ENCODE measurements at regions of chr2 and their contacts with region 1.

Region 1: GRCh38 chr2:45833968-45834344 is 182.5 kb downstream of the PRKCE start:
- DNase-seq: peak; percentile 29
- ATAC-seq: peak; percentile 75
- H3K4me3 Mint-ChIP-seq: peak overlapping the region; percentile 39
- H3K27ac Mint-ChIP-seq: peak overlapping the region; percentile 94
- H3K4me1 Mint-ChIP-seq: peaks cover 71% of the 10 kb centered on the region
- H3K27me3 Mint-ChIP-seq: no peaks in the 10 kb centered on the region
- CTCF ChIP-seq: no peak

Region 2: DNA sequence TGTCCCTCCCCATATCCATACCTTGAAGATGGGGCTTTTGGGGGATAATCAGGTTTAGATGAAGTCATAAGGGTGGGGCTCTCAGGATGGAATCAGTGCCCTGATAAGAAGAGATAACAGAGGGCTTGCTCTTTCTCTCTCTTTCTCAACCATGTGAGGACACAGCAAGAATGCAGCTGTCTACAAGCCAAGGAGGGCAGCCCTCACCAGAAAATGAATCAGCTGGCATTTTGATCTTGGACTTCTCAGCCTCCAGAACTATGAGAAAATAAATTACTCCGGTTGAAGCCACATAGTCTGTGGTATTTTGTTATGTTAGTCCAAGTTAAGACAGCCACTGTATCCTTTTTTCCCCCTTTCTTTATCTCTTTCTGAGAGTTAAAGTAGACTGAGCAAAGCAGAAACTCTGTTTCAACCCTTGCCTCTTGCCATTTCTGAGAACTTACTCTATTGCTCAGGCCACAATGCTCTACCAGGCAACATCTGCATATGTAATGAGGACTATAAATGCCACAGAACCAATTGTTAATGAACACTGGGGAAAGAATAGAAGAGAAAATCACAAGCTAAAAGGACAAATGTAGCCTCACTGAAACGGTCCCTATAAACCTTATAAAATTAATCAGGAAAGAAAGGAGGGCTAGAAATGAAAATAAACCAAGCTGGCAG is 279.7 kb before region 1 on chr2:
- CTCF ChIA-PET with region 1: no interaction called
- POLR2A ChIA-PET with region 1: no interaction called
- intact Hi-C with region 1: no loop called
- DNase-seq: no peak
- ATAC-seq: no peak
- H3K4me3 Mint-ChIP-seq: no peak overlapping the region
- H3K27ac Mint-ChIP-seq: no peak overlapping the region
- H3K4me1 Mint-ChIP-seq: no peaks in the 10 kb centered on the region
- H3K27me3 Mint-ChIP-seq: no peaks in the 10 kb centered on the region
- CTCF ChIP-seq: no peak

Region 3: DNA sequence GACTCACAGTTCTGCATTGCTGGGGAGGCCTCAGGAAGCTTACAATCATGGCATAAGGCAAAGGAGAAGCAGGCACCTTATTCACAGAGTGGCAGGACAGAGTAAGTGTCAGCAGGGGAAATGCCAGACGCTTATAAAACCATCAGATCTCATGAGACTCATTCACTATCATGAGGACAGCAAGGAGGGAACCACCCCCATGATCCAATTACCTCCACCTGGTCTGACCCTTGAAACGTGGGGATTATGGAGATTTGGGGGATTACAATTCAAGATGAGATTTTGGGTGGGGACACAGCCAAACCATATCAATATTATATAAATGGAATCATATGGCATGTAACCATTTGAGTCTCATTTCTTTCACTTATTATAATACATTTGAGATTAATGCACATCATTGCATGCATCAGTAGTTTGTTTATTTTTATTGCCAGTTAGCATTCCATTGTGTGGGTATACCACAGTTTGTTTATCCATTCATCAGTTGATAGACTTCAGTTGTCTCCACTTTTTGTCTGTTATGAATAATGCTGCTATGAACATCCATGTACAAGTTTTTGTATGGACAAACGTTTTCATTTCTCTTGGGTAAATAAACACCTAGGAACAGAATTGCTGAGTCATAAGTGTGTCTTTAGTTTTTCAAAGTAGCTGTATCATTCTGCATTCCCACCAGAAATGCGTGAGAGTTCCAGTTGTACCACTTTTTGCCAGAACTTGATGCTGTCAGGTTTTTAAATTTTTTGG is 217.1 kb before region 1 on chr2:
- CTCF ChIA-PET with region 1: no interaction called
- POLR2A ChIA-PET with region 1: no interaction called
- intact Hi-C with region 1: no loop called
- DNase-seq: no peak
- ATAC-seq: no peak
- H3K4me3 Mint-ChIP-seq: no peak overlapping the region
- H3K27ac Mint-ChIP-seq: no peak overlapping the region
- H3K4me1 Mint-ChIP-seq: peaks cover 5% of the 10 kb centered on the region
- H3K27me3 Mint-ChIP-seq: no peaks in the 10 kb centered on the region
- CTCF ChIP-seq: no peak

Region 4: DNA sequence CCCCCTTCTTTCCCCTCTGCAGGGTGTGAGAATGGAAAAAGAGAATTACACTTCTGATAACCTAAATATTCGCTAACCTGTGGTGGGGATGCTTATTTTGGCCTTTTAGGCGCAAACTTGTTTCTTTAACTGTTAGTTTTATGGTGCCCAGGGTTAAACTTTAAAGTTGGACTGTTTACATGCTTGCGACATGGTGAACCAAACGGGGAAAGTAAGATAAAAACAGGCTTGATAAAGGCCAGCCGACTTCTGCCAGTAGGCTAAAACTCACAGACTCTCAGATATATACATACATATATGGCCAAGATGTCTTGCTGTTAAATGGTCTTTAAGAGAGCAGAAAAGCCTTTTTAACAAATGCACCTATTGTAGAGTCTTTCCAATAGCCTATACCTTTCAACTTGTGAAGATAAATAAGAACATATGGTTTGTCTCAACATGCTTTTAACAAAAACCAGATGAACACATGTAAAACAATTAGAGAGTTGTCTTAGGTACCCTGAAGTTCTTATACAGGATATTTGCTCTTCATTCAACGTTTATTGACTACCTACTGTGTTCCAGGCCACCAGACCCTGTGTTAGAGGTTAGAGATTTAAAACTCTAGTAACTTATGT is 153.5 kb before region 1 on chr2:
- CTCF ChIA-PET with region 1: no interaction called
- POLR2A ChIA-PET with region 1: interaction called, 10 read pairs
- intact Hi-C with region 1: no loop called
- DNase-seq: no peak
- ATAC-seq: no peak
- H3K4me3 Mint-ChIP-seq: no peak overlapping the region
- H3K27ac Mint-ChIP-seq: no peak overlapping the region
- H3K4me1 Mint-ChIP-seq: peaks cover 52% of the 10 kb centered on the region
- H3K27me3 Mint-ChIP-seq: no peaks in the 10 kb centered on the region
- CTCF ChIP-seq: no peak

Region 5: DNA sequence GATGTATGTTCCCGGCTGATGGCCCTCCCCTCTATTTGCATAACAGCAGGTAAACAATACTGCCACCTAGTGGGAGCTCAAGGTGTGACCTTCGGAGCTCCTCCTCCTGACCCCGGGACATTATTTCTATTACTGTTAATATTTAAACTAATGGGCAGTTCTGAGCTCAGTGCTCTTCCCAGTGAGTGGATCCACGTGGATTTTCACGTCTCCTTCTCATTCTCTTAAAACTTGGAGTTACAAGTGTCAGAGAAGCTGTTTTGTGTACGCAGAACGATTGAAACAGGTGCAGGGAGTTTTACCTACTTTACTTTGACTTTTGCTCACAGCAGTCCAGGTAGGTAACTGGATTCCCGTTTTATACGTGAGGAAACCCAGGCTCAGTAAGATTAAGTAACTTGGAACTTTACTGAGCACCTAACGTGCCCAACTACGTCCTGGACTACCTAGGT is 55.2 kb before region 1 on chr2:
- CTCF ChIA-PET with region 1: interaction called, 10 read pairs
- POLR2A ChIA-PET with region 1: interaction called, 8 read pairs
- intact Hi-C with region 1: loop called (anchors 5 kb)
- DNase-seq: peak; percentile 35
- ATAC-seq: peak; percentile 83
- H3K4me3 Mint-ChIP-seq: peak overlapping the region; percentile 44
- H3K27ac Mint-ChIP-seq: peak overlapping the region; percentile 39
- H3K4me1 Mint-ChIP-seq: peaks cover 76% of the 10 kb centered on the region
- H3K27me3 Mint-ChIP-seq: no peaks in the 10 kb centered on the region
- CTCF ChIP-seq: no peak

Region 6: GRCh38 chr2:45851613-45852304 is 17.8 kb after region 1 on chr2:
- CTCF ChIA-PET with region 1: interaction called, 5 read pairs
- POLR2A ChIA-PET with region 1: interaction called, 7 read pairs
- intact Hi-C with region 1: loop called (anchors 2 kb)
- DNase-seq: no peak
- ATAC-seq: no peak
- H3K4me3 Mint-ChIP-seq: no peak overlapping the region
- H3K27ac Mint-ChIP-seq: no peak overlapping the region
- H3K4me1 Mint-ChIP-seq: peaks cover 46% of the 10 kb centered on the region
- H3K27me3 Mint-ChIP-seq: no peaks in the 10 kb centered on the region
- CTCF ChIP-seq: no peak

Region 7: GRCh38 chr2:45909663-45910191 is 75.8 kb after region 1 on chr2:
- CTCF ChIA-PET with region 1: no interaction called
- POLR2A ChIA-PET with region 1: no interaction called
- intact Hi-C with region 1: loop called (anchors 2 kb)
- DNase-seq: no peak
- ATAC-seq: peak; percentile 84
- H3K4me3 Mint-ChIP-seq: peak overlapping the region; percentile 53
- H3K27ac Mint-ChIP-seq: peak overlapping the region; percentile 73
- H3K4me1 Mint-ChIP-seq: peaks cover 70% of the 10 kb centered on the region
- H3K27me3 Mint-ChIP-seq: no peaks in the 10 kb centered on the region
- CTCF ChIP-seq: no peak